Activated naive CD4-positive, alpha-beta T cell treated with anti-CD3 and anti-CD28 coated beads for 36 hours (primary cell): ENCODE measurements at regions of chr1 and their contacts with region 1.

Region 1: GRCh38 chr1:95233737-95234500 is at the start of gene RWDD3:
- DNase-seq: peak; percentile 92
- H3K4me3 Mint-ChIP-seq: peak within 1 kb of the TSS; percentile 90
- H3K27ac Mint-ChIP-seq: peak within 1 kb of the TSS; percentile 84
- H3K4me1 Mint-ChIP-seq: peaks cover 40% of the 10 kb centered on the region
- H3K27me3 Mint-ChIP-seq: peaks cover 5% of the 10 kb centered on the region
- total RNA-seq, gene RWDD3: 11.4 to 12.4 TPM

Region 2: GRCh38 chr1:93304716-93305138 is 1929.2 kb before region 1 on chr1:
- CTCF ChIA-PET with region 1: no interaction called
- intact Hi-C with region 1: no loop called
- DNase-seq: peak; percentile 67
- H3K4me3 Mint-ChIP-seq: no peak overlapping the region
- H3K27ac Mint-ChIP-seq: no peak overlapping the region
- H3K4me1 Mint-ChIP-seq: no peaks in the 10 kb centered on the region
- H3K27me3 Mint-ChIP-seq: no peaks in the 10 kb centered on the region

Region 3: GRCh38 chr1:94039514-94039870 is 1194.4 kb before region 1 on chr1:
- CTCF ChIA-PET with region 1: no interaction called
- intact Hi-C with region 1: loop called (anchors 5 kb)
- DNase-seq: peak; percentile 74
- H3K4me3 Mint-ChIP-seq: no peak overlapping the region
- H3K27ac Mint-ChIP-seq: no peak overlapping the region
- H3K4me1 Mint-ChIP-seq: peaks cover 15% of the 10 kb centered on the region
- H3K27me3 Mint-ChIP-seq: peaks cover 26% of the 10 kb centered on the region

Region 4: GRCh38 chr1:94854458-94855306 is 379.2 kb before region 1 on chr1:
- CTCF ChIA-PET with region 1: interaction called, 11 read pairs
- intact Hi-C with region 1: loop called (anchors 2 kb)
- DNase-seq: peak; percentile 91
- H3K4me3 Mint-ChIP-seq: no peak overlapping the region
- H3K27ac Mint-ChIP-seq: no peak overlapping the region
- H3K4me1 Mint-ChIP-seq: no peaks in the 10 kb centered on the region
- H3K27me3 Mint-ChIP-seq: peaks cover 3% of the 10 kb centered on the region

Region 5: GRCh38 chr1:94993931-94994645 is 239.8 kb before region 1 on chr1:
- CTCF ChIA-PET with region 1: no interaction called
- intact Hi-C with region 1: no loop called
- DNase-seq: no peak
- H3K4me3 Mint-ChIP-seq: no peak overlapping the region
- H3K27ac Mint-ChIP-seq: no peak overlapping the region
- H3K4me1 Mint-ChIP-seq: peaks cover 20% of the 10 kb centered on the region
- H3K27me3 Mint-ChIP-seq: no peaks in the 10 kb centered on the region

Region 6: GRCh38 chr1:95043141-95043980 is 190.6 kb before region 1 on chr1:
- CTCF ChIA-PET with region 1: interaction called, 4 read pairs
- intact Hi-C with region 1: loop called (anchors 1 kb)
- DNase-seq: peak; percentile 87
- H3K4me3 Mint-ChIP-seq: no peak overlapping the region
- H3K27ac Mint-ChIP-seq: no peak overlapping the region
- H3K4me1 Mint-ChIP-seq: no peaks in the 10 kb centered on the region
- H3K27me3 Mint-ChIP-seq: no peaks in the 10 kb centered on the region

Region 7: GRCh38 chr1:95116580-95117206 is 117.2 kb before region 1 on chr1:
- CTCF ChIA-PET with region 1: interaction called, 4 read pairs
- intact Hi-C with region 1: loop called (anchors 1 kb)
- DNase-seq: peak; percentile 68
- H3K4me3 Mint-ChIP-seq: peak overlapping the region; percentile 76
- H3K27ac Mint-ChIP-seq: no peak overlapping the region
- H3K4me1 Mint-ChIP-seq: peaks cover 3% of the 10 kb centered on the region
- H3K27me3 Mint-ChIP-seq: peaks cover 24% of the 10 kb centered on the region

Region 8: DNA sequence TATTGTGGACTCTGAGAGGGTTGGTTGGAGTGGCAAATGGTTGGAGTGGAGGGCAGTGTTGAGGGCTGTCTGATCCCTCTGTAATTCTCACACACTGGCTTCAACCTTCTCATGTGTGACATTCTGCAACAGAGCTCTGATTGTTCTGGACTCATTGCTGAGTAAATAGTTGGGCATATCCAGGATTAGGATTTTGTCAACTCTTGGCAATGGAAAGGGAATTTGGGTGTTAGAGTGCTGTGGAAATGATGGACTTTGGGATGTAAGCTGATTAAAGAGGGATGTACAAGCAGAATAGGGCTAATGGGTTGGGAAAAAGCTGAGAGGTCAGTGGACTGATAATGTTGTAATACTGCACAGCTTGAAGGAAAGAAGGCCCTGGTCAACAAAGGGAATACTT is 100.2 kb before region 1 on chr1:
- CTCF ChIA-PET with region 1: no interaction called
- intact Hi-C with region 1: no loop called
- DNase-seq: no peak
- H3K4me3 Mint-ChIP-seq: no peak overlapping the region
- H3K27ac Mint-ChIP-seq: no peak overlapping the region
- H3K4me1 Mint-ChIP-seq: no peaks in the 10 kb centered on the region
- H3K27me3 Mint-ChIP-seq: peaks cover 5% of the 10 kb centered on the region

Region 9: DNA sequence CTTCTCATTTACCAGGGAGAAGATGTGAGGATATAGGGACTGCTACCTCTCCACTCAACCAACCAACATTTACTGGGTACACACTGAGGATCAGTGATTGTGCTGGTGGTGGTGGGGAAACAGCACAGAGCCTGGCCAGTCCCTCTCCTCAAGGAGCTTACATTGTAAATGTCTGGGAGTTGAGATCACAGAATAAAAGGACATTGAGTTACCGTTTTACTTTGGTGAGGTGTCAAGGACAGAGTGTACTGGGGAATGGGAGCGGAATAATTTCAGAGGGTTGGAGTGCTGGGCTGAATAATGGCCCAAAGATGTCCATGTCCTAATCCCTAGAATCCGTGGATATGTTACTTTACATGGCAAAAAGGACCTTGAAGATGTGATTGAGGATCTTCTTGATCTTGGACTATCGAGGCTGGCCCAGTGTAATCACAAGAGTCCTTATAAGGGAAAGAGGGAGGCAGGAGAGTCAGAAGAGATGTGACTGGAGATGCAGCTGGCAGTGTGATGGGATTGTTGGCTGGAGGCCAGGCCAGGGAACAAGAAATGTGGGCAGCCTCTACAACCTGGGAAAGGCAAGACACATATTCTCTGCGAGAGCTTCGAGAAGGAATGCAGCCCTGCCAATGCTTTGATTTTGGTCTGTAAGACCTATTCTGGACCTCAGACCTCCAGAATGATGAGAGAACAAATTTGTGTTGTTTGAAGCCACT is 26.5 kb before region 1 on chr1:
- CTCF ChIA-PET with region 1: no interaction called
- intact Hi-C with region 1: no loop called
- DNase-seq: no peak
- H3K4me3 Mint-ChIP-seq: no peak overlapping the region
- H3K27ac Mint-ChIP-seq: no peak overlapping the region
- H3K4me1 Mint-ChIP-seq: no peaks in the 10 kb centered on the region
- H3K27me3 Mint-ChIP-seq: peaks cover 6% of the 10 kb centered on the region

Region 10: GRCh38 chr1:96721416-96722160 is 1487.7 kb after region 1 on chr1 and contains the start of gene PTBP2:
- CTCF ChIA-PET with region 1: no interaction called
- intact Hi-C with region 1: loop called (anchors 5 kb)
- DNase-seq: peak; percentile 83
- H3K4me3 Mint-ChIP-seq: peak within 1 kb of the TSS; percentile 93
- H3K27ac Mint-ChIP-seq: peak within 1 kb of the TSS; percentile 92
- H3K4me1 Mint-ChIP-seq: peaks cover 23% of the 10 kb centered on the region
- H3K27me3 Mint-ChIP-seq: no peaks in the 10 kb centered on the region
- total RNA-seq, gene PTBP2: 12.6 to 13.1 TPM